IMR-90 (cell line): ENCODE measurements at regions of chr6 and their contacts with region 1.

Region 1: GRCh38 chr6:78835817-78836216 is 31.5 kb upstream of the IRAK1BP1 start:
- DNase-seq: peak; percentile 4
- ATAC-seq: no peak
- H3K4me3 ChIP-seq: no peak overlapping the region
- H3K27ac ChIP-seq: no peak overlapping the region
- H3K4me1 ChIP-seq: no peaks in the 10 kb centered on the region
- H3K27me3 ChIP-seq: no peaks in the 10 kb centered on the region
- CTCF ChIP-seq: peak; percentile 31
- POLR2A ChIP-seq: no peak
- RAD21 ChIP-seq: peak; percentile 45

Region 2: GRCh38 chr6:79466207-79466834 is 630.5 kb after region 1 on chr6:
- CTCF ChIA-PET with region 1: no interaction called
- POLR2A ChIA-PET with region 1: no interaction called
- dilution Hi-C with region 1: no loop called
- in situ Hi-C with region 1: no loop called
- intact Hi-C with region 1: loop called (anchors 10 kb)
- DNase-seq: peak; percentile 39
- ATAC-seq: peak; percentile 52
- H3K4me3 ChIP-seq: no peak overlapping the region
- H3K27ac ChIP-seq: no peak overlapping the region
- H3K4me1 ChIP-seq: peaks cover 4% of the 10 kb centered on the region
- H3K27me3 ChIP-seq: peaks cover 3% of the 10 kb centered on the region; the same call in 1 of the 2 replicates
- CTCF ChIP-seq: peak; percentile 58
- POLR2A ChIP-seq: no peak
- RAD21 ChIP-seq: peak; percentile 61